GM13977 (cell line): ENCODE measurements at regions of chr11 and their contacts with region 1.

Region 1: DNA sequence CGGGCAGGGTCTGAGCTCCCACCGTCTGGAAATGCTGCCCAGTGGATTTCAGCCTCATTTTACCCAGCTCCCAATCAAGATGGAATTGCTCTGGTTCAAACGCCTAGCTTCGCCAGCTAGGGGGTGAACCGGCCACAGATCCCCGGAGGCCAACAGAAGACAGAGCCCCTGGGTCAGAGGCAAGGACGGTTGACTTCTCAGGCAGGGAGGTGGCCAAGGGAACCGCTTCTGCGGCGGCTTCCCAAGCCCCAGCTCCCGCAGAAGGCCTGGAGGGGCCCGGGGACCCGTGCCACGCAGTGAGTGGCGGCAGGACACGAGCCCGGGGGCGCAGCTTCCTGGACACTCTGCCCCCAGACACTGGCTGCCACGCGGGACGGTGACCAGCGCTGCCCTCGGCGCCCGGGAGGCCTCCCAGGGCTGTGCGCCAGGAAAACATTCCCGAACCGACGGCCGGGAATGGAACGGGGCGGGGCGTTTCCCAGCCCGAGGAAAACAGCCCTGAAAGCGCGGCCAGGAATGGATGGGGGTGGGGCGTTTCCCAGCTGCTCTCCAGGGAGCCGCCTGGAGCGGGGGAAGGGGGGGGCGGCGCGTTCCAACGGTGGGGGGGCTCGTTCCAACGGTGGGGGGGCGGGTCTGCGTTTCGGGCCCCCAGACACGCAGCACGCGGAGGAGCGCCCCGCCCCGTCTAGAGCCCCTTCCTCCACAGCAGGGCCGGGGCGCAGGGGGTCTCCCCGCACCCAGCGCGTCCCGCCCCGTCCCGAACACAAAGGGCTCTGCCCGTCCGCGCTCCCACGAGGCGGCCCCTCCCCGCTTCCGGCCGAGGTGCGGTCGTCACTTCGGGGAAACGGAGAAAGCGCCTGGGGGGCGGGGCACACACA is 13.5 kb upstream of the B4GALNT4 start:
- DNase-seq: peak; percentile 94
- CTCF ChIP-seq: no peak

Region 2: GRCh38 chr11:257766-258493 is 97.9 kb before region 1 on chr11:
- in situ Hi-C with region 1: no loop called
- DNase-seq: peak; percentile 38
- CTCF ChIP-seq: peak; percentile 52

Region 3: DNA sequence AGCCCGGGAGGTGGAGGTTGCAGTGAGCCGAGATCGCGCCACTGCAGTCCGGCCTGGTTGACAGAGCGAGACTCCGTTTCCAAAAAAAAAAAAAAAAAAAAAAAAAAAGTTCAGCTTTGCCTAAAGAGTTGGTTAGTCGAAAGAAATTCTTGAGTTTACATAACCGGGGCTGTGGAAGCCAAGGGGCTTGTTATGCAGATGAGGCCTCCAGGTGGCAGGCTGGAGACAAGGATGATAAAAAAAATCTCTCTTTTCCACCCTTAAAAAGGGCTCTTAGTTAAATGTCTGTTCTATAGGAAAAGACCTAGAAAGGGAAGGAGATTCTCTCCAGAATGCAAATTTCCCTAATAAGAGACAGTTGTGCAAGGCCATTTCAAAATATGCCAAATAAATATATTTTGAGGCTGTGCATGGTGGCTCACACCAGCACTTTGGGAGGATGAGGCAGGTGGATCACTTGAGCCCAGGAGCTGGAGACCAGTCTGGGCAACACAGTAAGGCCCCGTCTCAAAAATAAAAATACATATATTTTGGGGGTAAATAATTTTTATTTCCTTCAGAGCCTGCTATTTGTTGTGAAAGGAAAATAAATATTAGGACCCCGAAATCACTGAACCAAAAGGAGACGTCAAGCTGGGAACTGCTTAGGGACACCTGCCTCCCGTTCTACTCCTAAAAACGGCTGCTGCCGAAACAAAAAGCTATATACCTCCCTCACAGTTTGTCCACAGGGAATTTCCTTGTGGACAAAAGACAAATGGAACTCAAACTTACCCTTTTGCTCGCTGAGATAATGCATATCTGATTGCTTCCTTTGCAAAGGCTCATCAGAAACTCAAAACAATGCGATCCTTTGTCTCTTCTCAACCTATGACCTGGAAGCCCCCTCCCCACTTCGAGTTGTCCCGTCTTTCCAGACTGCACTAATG is 50.6 kb before region 1 on chr11:
- in situ Hi-C with region 1: loop called (anchors 10 kb)
- DNase-seq: peak; percentile 85
- CTCF ChIP-seq: peak; percentile 67

Region 4: GRCh38 chr11:636452-637235 is 280.8 kb after region 1 on chr11:
- in situ Hi-C with region 1: no loop called
- DNase-seq: no peak
- CTCF ChIP-seq: no peak